Activated naive CD4-positive, alpha-beta T cell treated with anti-CD3 and anti-CD28 coated beads, Interleukin-2, amount 10 ng/mL, durations not matched to agents 7 days and 5 days (primary cell): ENCODE measurements at regions of chr12 and their contacts with region 1.

Region 1: GRCh38 chr12:96516472-96517430 is 27.4 kb downstream of the CFAP54 start:
- DNase-seq: peak; percentile 94
- H3K4me3 Mint-ChIP-seq: peak overlapping the region; percentile 15
- H3K27ac Mint-ChIP-seq: peak overlapping the region; percentile 67
- H3K4me1 Mint-ChIP-seq: peaks cover 18% of the 10 kb centered on the region
- H3K27me3 Mint-ChIP-seq: no peaks in the 10 kb centered on the region

Region 2: DNA sequence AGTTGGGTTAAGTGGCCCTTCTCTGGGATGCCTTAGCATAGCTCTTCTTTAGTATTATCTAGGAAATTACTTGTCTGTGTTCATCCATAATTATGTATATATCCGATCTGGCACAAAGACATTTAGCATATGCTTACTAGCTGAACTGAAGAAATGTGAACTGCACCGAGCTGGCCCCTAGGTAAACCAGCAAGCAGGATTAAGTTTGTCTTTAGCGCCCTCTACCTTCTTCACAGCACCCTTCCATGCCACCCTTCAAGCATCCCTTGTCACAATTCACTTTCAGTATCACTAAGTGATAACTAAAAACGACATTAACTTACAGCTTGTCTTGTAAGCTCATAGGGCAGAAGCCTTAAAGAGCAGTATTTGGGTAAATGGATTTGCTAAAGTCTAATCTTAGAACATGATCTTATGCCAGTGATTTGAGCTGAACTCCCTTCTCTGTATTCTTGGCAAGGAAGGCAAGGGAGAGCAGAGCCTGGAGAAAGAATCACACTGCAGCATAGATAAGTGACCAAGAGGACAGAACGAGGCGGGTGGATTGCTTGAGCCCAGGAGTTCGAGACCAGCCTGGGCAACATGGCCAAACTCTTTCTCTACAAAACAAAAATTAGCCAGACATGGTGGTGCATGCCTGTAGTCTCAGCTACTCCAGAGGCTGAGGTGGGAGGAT is 518.0 kb before region 1 on chr12:
- CTCF ChIA-PET with region 1: interaction called, 13 read pairs
- DNase-seq: peak; percentile 66
- H3K4me3 Mint-ChIP-seq: no peak overlapping the region
- H3K27ac Mint-ChIP-seq: peak overlapping the region; percentile 52
- H3K4me1 Mint-ChIP-seq: peaks cover 7% of the 10 kb centered on the region
- H3K27me3 Mint-ChIP-seq: no peaks in the 10 kb centered on the region

Region 3: DNA sequence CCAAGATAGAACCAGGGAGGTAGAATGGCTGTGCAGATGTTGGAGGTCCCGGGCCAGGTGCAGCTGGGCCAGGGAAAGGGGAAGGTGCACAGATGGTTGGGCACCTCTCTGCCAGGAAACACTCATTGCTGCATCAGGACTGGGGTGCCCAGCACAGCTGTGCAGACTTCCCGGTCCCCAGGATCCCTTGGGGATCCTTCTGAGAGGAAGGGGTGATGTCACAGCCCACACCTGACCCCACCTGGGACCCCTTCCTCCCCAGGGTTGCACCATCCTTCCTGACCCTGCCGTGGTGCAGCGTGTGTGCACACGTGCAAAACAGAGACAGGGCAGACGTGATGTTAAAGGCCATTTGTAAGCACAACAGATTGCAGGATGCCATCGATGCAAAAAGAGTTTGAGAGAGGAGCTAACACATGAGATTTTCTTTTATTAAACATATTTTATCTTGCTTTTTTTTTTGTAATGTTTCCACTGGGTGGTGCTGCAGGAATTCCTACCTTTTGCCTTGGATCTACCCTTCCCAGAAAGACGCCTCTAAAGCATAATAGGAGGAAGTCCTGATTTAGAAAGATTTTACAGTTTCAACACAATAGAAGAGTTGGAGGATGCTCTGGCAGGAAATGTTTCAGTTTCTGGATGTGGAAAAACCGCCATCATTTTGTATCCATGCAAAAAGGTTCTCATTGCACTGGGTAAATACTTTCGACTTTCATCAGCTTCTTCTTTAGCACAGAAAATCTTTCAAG is 307.8 kb before region 1 on chr12:
- CTCF ChIA-PET with region 1: interaction called, 19 read pairs
- DNase-seq: no peak
- H3K4me3 Mint-ChIP-seq: peak overlapping the region; percentile 72
- H3K27ac Mint-ChIP-seq: peak overlapping the region; percentile 84
- H3K4me1 Mint-ChIP-seq: peaks cover 98% of the 10 kb centered on the region
- H3K27me3 Mint-ChIP-seq: no peaks in the 10 kb centered on the region

Region 4: DNA sequence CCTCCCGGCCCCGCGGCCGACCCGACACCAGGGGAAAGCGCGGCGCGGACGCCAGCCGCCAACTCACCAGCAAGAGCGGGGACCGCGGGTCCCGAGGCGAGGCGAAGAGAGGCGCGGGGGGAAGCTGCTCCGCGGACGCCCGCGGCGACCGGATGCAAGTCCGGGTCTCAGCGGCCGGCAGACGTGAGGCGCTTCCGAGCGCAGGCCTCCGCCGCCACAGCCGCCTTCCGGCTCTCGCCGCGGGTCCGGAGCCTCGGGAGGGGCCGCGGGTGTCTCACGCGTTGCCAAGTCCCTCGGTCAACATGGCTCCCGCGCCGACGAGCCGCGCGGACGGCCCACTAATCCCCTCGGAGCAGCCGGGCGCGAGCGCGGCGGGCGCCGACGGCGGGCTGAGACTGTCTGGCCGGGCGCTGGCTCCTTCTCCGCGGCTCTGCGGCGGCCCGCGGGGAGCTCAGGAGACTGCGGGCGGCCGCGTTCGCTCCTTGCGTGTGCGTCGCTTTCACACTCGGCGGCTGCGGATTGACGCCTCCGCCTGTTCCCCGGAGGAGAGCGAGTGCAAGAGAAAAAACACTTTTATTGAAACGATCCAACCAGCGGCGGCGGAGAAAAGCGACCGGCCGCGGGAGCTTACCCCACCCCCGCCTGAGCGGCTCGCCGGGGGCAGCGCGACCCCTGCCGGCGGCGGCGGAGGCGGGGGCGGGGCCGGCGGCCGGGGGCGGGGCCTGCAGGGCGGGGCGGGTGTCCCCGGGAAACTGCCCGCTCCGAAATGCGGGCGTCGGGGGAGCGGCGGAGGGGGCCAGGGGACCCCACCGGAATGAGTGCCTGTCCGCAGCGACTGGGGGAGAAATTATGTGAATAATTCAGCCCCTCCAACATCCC is 116.6 kb before region 1 on chr12 and contains the start of gene CDK17:
- CTCF ChIA-PET with region 1: interaction called, 60 read pairs
- DNase-seq: peak; percentile 90
- H3K4me3 Mint-ChIP-seq: peak within 1 kb of the TSS; percentile 91
- H3K27ac Mint-ChIP-seq: peak within 1 kb of the TSS; percentile 99
- H3K4me1 Mint-ChIP-seq: peaks cover 55% of the 10 kb centered on the region
- H3K27me3 Mint-ChIP-seq: no peaks in the 10 kb centered on the region

Region 5: DNA sequence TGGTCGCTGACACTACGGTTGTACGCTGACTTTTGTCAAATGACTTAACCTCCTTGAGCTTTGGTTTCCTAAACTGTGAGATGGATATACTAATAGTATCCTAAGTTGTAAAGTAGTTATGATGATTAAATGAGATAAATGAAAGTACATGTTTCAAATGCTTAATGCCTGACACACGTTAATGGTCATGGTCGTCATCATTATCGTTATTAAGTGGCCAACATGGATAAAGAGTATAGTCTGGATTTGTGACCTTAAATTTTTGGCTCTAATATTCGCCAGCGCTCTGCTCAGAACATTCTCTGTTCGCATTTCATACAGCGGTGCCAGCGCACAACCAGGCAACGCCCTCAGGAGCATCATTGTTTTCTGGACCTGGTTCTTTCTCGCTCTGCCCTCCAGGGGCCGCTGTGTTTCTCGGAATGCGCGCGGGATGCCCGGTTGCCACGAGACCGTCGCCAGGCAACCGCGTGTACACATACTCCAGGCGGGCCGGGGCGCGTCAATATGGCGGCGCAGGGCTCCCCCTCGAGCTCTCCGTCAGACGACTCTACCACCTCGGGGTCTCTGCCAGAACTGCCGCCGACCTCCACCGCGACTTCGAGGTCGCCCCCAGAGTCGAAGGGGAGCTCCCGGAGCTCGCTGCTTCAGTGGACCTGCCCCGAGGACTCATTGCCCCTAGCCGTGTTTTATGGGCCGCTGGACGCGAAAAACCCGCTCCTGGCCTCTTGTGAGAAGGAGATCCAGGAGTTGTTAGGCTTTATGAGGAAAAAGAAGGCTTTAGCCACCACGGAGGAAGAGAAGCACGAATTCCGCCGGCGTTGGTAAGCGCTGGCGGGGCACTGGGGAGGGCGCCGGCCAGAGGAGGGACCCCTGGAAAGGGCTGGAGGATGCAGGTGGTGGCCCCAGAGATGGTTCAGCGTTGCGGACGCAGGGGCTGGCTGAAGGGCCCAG is 27.4 kb before region 1 on chr12 and contains the start of gene CFAP54:
- CTCF ChIA-PET with region 1: interaction called, 30 read pairs
- DNase-seq: peak; percentile 96
- H3K4me3 Mint-ChIP-seq: peak within 1 kb of the TSS; percentile 79
- H3K27ac Mint-ChIP-seq: no peak within 1 kb of the TSS
- H3K4me1 Mint-ChIP-seq: peaks cover 30% of the 10 kb centered on the region
- H3K27me3 Mint-ChIP-seq: peaks cover 28% of the 10 kb centered on the region

Region 6: DNA sequence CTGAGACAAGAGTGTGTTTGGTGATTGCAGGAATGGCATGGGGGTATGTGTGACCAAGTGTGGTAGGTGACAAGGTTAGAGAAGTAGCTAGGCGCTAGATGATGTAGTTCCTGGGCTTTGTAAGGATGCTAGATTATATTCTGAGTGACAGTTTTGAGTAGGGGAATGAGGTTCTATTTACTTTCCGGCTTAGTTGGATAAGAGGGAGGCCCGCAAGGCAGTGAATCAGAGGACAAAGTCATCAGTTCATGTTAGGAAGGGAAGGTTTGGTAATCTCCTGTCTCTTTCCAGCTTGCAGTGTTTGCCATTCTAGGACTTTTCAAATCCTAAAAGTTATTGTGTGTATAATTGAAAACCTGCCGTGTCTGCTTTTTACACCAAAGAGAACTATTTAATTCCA is 17.6 kb after region 1 on chr12:
- CTCF ChIA-PET with region 1: no interaction called
- DNase-seq: no peak
- H3K4me3 Mint-ChIP-seq: no peak overlapping the region
- H3K27ac Mint-ChIP-seq: no peak overlapping the region
- H3K4me1 Mint-ChIP-seq: peaks cover 2% of the 10 kb centered on the region
- H3K27me3 Mint-ChIP-seq: peaks cover 12% of the 10 kb centered on the region